ENCODE measurements at regions of chr16 and their contacts with region 1.

Region 1: DNA sequence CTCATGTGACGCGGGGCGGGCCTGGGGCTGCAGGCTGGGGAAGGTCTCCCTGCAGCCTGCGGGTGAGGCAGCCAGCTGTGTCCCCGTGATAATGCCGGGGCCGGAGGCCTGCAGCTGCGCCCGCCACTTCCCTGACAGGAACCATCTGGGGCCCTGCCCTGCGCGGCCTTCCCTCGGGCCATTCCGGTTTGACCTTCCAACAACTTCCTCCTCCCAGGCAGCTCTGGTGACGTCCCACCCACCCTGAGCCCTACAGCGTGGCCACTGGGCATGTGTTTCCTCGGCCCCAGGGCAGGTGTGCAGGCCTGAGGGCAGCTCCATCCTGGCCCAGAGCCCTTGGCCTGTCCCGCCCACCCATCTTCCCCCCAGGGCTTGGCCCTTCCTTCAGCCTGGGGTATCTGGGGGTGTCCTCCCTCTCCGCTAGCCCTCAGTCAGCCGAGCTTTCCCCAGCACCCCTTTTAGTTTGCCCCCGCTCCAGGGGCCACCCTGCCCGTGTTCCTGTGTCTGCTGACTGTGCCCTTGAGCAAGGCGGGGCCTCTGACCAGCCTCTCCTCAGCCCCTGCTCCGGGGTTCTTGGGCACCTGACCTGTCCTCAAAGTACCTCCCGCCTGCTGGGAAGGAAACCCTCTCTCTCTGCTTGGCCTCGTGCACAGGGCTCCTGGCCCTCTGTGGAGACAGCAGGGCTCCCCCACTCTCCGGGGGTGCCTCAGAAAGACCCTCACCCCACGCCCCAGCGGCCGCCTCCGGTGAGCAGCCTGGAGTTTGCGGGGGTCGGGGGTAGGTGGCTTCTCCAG is at the start of gene CBFA2T3:
- DNase-seq: peak; percentile 83 to 91 (median 85)
- ATAC-seq: peak; percentile 55 to 94 (median 90)
- H3K4me3 ChIP-seq: peak within 1 kb of the TSS in 10 of 12 donors; percentile 2 to 55 (median 29)
- H3K27ac ChIP-seq: peak within 1 kb of the TSS in 3 of 12 donors; percentile 24 to 38 (median 32)
- H3K4me1 ChIP-seq: peaks cover 0 to 40% (median 13%) of the 10 kb centered on the region in 12 donors
- H3K27me3 ChIP-seq: peaks cover 0 to 44% (median 7%) of the 10 kb centered on the region in 9 donors
- CTCF ChIP-seq: no peak
- POLR2A ChIP-seq: peak in 1 of 2 donors; percentile 20
- total RNA-seq, gene CBFA2T3: 5.0 to 12.0 (median 5.8) TPM

Region 2: DNA sequence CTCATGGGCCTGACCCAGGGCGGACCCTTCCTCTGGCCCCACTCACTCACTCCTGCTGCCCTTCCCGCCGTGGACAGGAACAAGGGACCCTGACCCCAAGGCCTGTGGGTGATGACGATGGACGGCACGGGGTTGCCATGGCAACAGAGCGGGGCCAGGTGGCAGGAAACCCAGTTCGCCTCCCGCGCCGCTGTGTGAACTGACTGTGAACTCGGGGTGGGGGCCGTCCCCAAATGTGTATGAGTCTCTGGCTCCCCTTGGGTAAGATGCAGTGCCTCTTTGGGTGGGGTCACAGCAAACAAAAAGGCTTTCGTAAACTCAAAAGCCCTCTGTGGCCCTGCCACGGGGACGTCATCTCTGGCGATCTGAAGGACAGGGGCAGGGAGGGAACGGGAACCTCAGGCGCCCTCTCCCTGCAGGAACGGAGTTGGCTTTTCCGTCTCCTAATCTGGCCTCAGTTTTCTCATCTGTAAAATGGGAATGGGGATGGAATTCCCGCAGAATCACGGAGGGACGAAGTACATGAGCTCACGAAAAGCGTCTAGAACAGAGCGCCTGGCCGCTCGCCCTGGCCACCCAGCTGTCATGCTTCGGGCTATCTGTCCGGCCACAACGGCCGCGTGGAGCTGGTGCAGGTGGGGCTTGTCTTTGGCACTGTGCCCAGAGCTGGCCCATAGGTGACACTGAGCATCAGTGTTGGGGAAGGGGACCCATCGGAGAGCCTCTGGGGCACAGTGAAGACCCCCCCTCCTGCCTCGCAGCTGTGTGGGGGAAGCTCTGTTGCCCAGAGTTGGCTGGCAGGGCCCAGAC is 65.9 kb before region 1 on chr16:
- intact Hi-C with region 1: loop called in 1 of 10 experiments (anchors 2 kb)
- DNase-seq: no peak
- ATAC-seq: peak in 1 of 4 donors; percentile 9
- H3K4me3 ChIP-seq: no peak overlapping the region
- H3K27ac ChIP-seq: peak overlapping the region in 7 of 12 donors; percentile 2 to 79 (median 48)
- H3K4me1 ChIP-seq: peaks cover 0 to 60% (median 19%) of the 10 kb centered on the region in 12 donors
- H3K27me3 ChIP-seq: no peaks in the 10 kb centered on the region
- CTCF ChIP-seq: no peak
- POLR2A ChIP-seq: no peak

Region 3: DNA sequence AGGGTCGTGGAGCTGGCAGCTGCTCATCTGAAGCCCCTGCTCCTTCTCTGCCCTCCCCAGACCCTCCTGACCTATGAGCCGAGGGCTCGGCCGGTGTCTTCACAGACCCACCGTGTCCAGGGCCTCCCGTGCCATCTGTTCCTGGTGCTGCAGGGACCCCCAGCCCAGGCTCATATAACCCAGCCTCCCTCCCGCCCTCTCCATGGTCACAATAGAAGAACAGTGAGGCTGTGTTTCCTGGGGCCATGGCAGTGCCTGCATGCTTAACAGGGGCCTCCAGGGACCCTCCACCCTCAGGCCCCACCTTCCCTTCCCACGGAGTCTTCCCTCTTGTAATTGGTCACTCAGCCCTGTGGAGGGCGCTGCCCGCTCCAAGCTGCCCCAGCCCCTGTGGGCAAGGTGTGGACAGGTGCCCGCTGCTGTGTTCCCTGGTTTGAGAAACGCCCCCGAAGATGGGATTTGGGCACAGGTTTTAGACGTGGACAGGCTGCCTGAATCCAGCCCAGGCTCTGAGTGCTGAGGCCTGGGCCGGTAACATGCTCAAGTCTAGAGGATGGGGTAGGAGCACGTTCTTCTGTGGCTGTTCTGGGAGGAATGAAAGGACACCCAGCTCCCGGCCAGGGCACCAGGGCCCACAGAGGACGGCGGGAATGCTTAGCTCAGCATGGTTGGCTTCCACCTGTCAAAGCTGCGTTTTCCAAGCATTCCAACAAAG is 155.2 kb after region 1 on chr16:
- intact Hi-C with region 1: no loop called
- DNase-seq: peak in 2 of 5 donors; percentile 14 to 41
- ATAC-seq: peak in 1 of 4 donors; percentile 14
- H3K4me3 ChIP-seq: no peak overlapping the region
- H3K27ac ChIP-seq: no peak overlapping the region
- H3K4me1 ChIP-seq: no peaks in the 10 kb centered on the region
- H3K27me3 ChIP-seq: no peaks in the 10 kb centered on the region
- CTCF ChIP-seq: no peak
- POLR2A ChIP-seq: no peak